AG04450 (cell line): ENCODE measurements at regions of chr12 and their contacts with region 1.

Region 1: DNA sequence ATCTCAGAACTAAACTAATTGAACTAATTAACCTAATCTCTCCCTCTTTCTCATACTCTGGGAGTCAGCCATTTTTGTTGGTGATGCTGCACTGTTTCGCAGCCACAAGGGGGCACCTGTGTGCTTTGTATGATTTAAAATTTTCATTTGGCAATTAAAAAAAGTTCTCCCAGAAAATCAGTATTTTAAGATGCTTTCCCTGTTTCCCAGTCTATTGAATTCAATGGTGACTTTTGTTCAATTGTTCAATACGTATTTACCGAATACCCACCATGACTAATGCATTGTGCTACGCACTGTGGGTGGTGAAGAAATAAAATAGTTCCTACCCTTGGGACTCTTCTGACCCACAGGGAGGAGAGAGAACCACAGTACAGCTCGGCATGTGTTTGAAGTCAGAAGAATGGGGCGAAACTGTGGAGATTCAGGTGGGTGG is 63.7 kb downstream of the ZNF664 start:
- DNase-seq: peak; percentile 15
- H3K4me3 ChIP-seq: no peak overlapping the region
- H3K27ac ChIP-seq: no peak overlapping the region
- H3K27me3 ChIP-seq: no peaks in the 10 kb centered on the region
- CTCF ChIP-seq: peak; percentile 93

Region 2: GRCh38 chr12:123801573-123802178 is 235.0 kb before region 1 on chr12:
- CTCF ChIA-PET with region 1: interaction called, 35 read pairs
- POLR2A ChIA-PET with region 1: no interaction called
- DNase-seq: peak; percentile 7
- H3K4me3 ChIP-seq: no peak overlapping the region
- H3K27ac ChIP-seq: no peak overlapping the region
- H3K27me3 ChIP-seq: no peaks in the 10 kb centered on the region
- CTCF ChIP-seq: peak; percentile 70

Region 3: DNA sequence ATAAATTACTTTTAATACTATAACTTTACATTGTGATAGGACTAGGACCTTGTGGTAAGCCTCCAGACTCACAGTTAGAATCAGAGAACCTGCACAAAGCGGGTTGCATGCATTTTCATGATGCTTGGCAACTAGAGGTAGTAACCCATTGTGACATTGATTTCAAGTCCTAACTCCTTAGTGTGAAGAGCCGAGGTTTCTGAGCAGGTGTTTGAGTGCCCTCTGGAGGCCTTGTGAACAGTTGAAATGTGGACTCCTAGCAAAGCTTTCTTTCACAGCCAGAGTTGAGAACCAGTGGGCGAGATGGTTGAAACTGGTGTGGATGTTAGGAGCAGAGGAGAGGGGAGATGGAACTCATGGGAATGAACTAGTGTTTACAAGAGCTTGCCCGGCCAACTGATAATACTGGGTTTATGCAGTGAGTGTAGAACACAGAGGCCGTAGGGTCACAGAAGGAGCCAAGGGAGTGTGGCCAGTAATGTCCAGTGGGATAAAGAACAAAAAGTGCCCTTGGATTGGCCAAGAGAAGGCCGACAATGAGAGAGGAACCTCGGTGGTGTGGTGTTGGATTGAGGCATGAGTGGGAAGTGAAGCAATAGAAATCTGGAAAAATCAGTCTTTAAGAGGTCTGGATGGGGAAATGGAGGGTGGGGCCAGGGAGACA is 52.7 kb before region 1 on chr12:
- CTCF ChIA-PET with region 1: interaction called, 13 read pairs
- POLR2A ChIA-PET with region 1: no interaction called
- DNase-seq: no peak
- H3K4me3 ChIP-seq: no peak overlapping the region
- H3K27ac ChIP-seq: no peak overlapping the region
- H3K27me3 ChIP-seq: no peaks in the 10 kb centered on the region
- CTCF ChIP-seq: peak; percentile 85

Region 4: GRCh38 chr12:124020514-124020949 is 16.2 kb before region 1 on chr12:
- CTCF ChIA-PET with region 1: interaction called, 14 read pairs
- POLR2A ChIA-PET with region 1: no interaction called
- DNase-seq: no peak
- H3K4me3 ChIP-seq: no peak overlapping the region
- H3K27ac ChIP-seq: no peak overlapping the region
- H3K27me3 ChIP-seq: no peaks in the 10 kb centered on the region
- CTCF ChIP-seq: no peak

Region 5: DNA sequence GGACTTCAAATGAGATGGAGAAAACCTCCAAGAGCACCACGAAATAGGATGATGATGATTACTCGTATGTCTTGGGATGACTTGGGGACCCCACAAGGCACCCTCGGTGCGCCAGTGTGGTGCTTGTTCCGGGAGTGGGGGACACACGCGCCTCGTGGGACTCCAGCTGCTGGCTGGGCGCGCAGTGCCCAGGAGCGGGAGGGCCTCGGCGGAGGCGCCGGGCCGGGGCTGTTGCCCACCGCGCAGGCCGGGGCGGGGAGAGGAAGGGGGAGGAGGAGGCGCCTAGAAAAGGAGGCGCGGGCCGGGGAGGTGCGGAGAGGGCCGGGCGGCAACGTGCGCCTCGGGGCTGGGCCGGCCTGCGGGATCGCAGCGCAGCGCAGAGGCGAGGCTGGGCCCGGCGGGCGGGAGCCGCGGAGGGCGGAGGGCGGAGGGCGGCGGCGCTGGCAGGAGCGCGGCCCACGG is 258.1 kb after region 1 on chr12 and contains the start of gene RFLNA:
- CTCF ChIA-PET with region 1: no interaction called
- POLR2A ChIA-PET with region 1: no interaction called
- DNase-seq: no peak
- H3K4me3 ChIP-seq: no peak within 1 kb of the TSS
- H3K27ac ChIP-seq: no peak within 1 kb of the TSS
- H3K27me3 ChIP-seq: peaks cover 50% of the 10 kb centered on the region
- CTCF ChIP-seq: no peak
- polyA plus RNA-seq, gene RFLNA: not detected in 2 replicates

Region 6: DNA sequence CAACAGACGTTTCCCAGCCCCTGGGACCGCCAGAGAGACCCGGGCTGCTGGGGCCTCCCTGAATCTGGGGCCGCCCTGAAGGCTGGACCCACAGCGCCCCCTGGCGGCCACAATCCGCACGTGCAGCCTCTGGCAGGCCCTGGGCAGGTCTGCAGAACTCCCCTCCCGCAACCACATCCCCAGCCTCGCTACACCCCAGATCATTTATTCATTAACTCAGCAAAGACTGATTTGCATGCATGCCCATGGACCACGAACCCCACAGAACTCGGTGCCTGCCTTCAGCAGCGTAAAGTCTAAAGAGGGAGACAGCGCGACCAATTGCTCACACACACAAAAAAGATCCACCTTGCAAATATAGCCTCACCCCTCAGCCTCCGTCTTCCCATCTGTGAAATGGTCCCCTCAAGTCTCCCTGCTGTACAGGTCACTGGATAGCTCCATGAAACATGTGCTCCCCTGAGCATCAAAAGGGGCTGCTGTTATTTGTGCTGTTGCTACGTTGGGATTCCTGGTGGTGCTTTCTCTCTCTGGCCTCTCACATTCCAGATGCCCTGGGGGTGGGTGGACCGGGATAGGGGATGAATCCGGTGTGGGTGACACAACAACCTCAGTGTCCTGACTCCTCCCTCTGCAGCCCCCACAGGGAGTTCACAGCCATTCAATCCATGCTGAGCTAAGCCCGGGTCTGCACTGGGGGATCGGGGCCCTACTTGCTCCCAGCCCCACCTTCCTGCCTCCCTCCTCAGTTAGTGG is 730.6 kb after region 1 on chr12:
- CTCF ChIA-PET with region 1: interaction called, 17 read pairs
- POLR2A ChIA-PET with region 1: no interaction called
- DNase-seq: no peak
- H3K4me3 ChIP-seq: no peak overlapping the region
- H3K27ac ChIP-seq: no peak overlapping the region
- H3K27me3 ChIP-seq: no peaks in the 10 kb centered on the region
- CTCF ChIP-seq: peak; percentile 97